Head of caudate nucleus (tissue), 42 donors: ENCODE measurements at regions of chr22 and their contacts with region 1.

Region 1: DNA sequence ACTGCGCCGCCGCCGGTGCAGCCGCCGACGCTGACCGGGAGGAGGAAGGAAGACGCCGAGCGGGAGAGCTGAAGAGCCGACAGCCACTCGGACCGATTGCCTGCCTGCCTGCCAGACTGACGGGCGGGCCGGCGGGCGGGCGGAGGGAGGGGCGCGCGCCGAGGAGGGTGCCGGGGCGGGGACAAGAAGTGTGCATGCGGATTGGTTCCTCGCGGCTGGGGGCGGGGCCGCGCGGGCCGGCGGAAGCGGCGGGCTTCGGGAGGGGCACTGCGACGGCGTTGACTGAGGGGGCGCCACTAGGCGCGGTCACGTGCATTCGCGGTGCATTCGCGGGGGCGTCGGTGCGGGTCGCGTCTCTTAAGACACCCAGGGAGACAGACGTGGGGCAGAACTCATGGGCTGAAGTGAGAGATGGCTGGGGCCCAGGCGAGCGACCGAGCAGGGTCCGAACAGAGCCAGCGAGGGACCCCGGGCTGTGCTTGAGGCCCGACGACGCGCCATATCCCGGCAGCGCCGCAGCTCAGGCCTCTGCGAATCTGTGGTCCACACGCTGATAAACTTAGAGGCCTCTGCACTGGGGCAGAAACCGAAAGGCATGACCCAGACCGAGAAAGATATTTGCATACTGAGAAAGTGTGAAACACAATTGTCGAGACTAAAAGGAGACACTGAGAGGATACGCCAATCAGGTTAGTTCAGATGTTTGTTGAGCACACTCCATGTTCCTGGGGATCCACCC is at the start of gene MAPK1:
- DNase-seq: peak; percentile 92 to 99 (median 97)

Region 2: GRCh38 chr22:21735200-21736076 is 132.3 kb before region 1 on chr22 and contains the start of gene YPEL1:
- intact Hi-C with region 1: loop called (anchors 2 kb)
- DNase-seq: peak; percentile 88 to 99 (median 98)

Region 3: GRCh38 chr22:21807544-21808529 is 59.9 kb before region 1 on chr22:
- intact Hi-C with region 1: loop called (anchors 10 kb)
- DNase-seq: no peak